ENCODE measurements at regions of chr10 and their contacts with region 1.

Region 1: GRCh38 chr10:112177247-112177646 is 6.3 kb downstream of the GPAM start:
- DNase-seq: no peak
- ATAC-seq: no peak
- H3K4me3 ChIP-seq: no peak overlapping the region
- H3K27ac ChIP-seq: no peak overlapping the region
- H3K4me1 ChIP-seq: no peaks in the 10 kb centered on the region
- H3K27me3 ChIP-seq: no peaks in the 10 kb centered on the region
- CTCF ChIP-seq: no peak
- EP300 ChIP-seq: no peak
- POLR2A ChIP-seq: no peak
- RAD21 ChIP-seq: no peak

Region 2: DNA sequence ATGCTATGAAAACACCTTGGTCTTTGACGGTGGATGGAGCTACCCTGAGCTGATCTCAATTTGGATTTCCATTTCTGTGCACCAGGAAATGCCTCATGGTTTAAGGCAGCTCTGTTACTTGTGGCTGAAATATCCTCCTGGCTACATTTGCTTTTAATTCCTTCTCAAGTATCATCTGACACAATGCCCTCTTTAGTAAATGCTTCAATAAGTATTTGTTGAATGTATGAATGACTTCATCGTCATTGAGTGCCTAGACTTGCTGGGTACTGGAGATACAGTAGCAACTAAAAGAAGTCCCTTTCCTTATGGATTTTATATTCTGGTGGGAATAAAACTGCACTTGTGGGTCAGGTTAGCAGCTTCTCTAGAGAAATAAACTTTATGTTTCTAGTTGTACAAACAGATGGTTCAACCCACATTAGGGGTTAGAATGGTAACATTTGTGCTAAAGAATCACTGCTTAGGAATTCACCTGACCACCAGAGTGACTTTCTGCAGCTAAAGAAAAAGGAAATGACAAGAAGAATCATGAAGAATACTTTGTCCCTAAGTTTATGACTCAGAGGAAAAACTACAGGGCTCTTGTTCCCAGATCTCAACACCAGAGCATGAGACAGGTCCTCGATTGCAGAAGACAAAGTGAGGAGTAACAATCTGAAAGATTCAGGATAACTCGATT is 1850.8 kb before region 1 on chr10:
- CTCF ChIA-PET with region 1: no interaction called
- POLR2A ChIA-PET with region 1: no interaction called
- in situ Hi-C with region 1: loop called (anchors 10 kb)
- intact Hi-C with region 1: no loop called
- DNase-seq: no peak
- ATAC-seq: no peak
- H3K4me3 ChIP-seq: no peak overlapping the region
- H3K27ac ChIP-seq: no peak overlapping the region
- H3K4me1 ChIP-seq: no peaks in the 10 kb centered on the region
- H3K27me3 ChIP-seq: peaks cover 3 to 10% of the 10 kb centered on the region in 2 experiments; a peak in 1 of 5 replicates
- CTCF ChIP-seq: no peak
- EP300 ChIP-seq: no peak
- POLR2A ChIP-seq: no peak
- RAD21 ChIP-seq: no peak

Region 3: GRCh38 chr10:112446855-112447711 is 269.8 kb after region 1 on chr10 and contains the starts of genes VTI1A and ZDHHC6:
- CTCF ChIA-PET with region 1: no interaction called
- POLR2A ChIA-PET with region 1: no interaction called
- in situ Hi-C with region 1: loop called (anchors 10 kb)
- intact Hi-C with region 1: no loop called
- DNase-seq: peak; percentile 73 to 88 (median 77)
- ATAC-seq: peak; percentile 97
- H3K4me3 ChIP-seq: peak within 1 kb of the TSS; percentile 73
- H3K27ac ChIP-seq: peak within 1 kb of the TSS; percentile 97
- H3K4me1 ChIP-seq: peaks cover 0 to 5% of the 10 kb centered on the region in 2 experiments; a peak in 2 of 5 replicates
- H3K27me3 ChIP-seq: no peaks in the 10 kb centered on the region
- CTCF ChIP-seq: peak; percentile 32 to 37 (median 36); a peak in 2 of 6 replicates
- EP300 ChIP-seq: no peak
- POLR2A ChIP-seq: peak; percentile 65
- RAD21 ChIP-seq: no peak
- polyA plus RNA-seq, gene VTI1A: 9.3 to 13.3 TPM
- polyA plus RNA-seq, gene ZDHHC6: 21.5 to 30.1 TPM

Measured in K562 (cell line).